Activated T-helper 1 cell treated with anti-CD3 and anti-CD28 coated beads, Interleukin-12 subunit alpha, Interleukin-12 subunit beta, Interleukin-2, Interleukin-4 antibody, amounts not matched to agents 30 ng/mL and 10 ng/mL and 1 ng/mL, durations not matched to agents 14 hours and 24 hours and 36 hours (primary cell): ENCODE measurements at regions of chr16 and their contacts with region 1.

Region 1: GRCh38 chr16:85114909-85115567 is 2.8 kb upstream of the CIBAR2 start:
- DNase-seq: peak; percentile 68
- H3K4me3 Mint-ChIP-seq: peak overlapping the region; percentile 60
- H3K27ac Mint-ChIP-seq: peak overlapping the region; percentile 70
- H3K4me1 Mint-ChIP-seq: peaks cover 7% of the 10 kb centered on the region
- H3K27me3 Mint-ChIP-seq: peaks cover 1% of the 10 kb centered on the region

Region 2: GRCh38 chr16:85104821-85105391 is 10.1 kb before region 1 on chr16:
- intact Hi-C with region 1: no loop called
- DNase-seq: peak; percentile 14
- H3K4me3 Mint-ChIP-seq: no peak overlapping the region
- H3K27ac Mint-ChIP-seq: peak overlapping the region; percentile 83
- H3K4me1 Mint-ChIP-seq: peaks cover 16% of the 10 kb centered on the region
- H3K27me3 Mint-ChIP-seq: peaks cover 3% of the 10 kb centered on the region

Region 3: GRCh38 chr16:85126705-85127419 is 11.8 kb after region 1 on chr16:
- intact Hi-C with region 1: loop called (anchors 1 kb)
- DNase-seq: no peak
- H3K4me3 Mint-ChIP-seq: no peak overlapping the region
- H3K27ac Mint-ChIP-seq: peak overlapping the region; percentile 63
- H3K4me1 Mint-ChIP-seq: peaks cover 11% of the 10 kb centered on the region
- H3K27me3 Mint-ChIP-seq: no peaks in the 10 kb centered on the region

Region 4: DNA sequence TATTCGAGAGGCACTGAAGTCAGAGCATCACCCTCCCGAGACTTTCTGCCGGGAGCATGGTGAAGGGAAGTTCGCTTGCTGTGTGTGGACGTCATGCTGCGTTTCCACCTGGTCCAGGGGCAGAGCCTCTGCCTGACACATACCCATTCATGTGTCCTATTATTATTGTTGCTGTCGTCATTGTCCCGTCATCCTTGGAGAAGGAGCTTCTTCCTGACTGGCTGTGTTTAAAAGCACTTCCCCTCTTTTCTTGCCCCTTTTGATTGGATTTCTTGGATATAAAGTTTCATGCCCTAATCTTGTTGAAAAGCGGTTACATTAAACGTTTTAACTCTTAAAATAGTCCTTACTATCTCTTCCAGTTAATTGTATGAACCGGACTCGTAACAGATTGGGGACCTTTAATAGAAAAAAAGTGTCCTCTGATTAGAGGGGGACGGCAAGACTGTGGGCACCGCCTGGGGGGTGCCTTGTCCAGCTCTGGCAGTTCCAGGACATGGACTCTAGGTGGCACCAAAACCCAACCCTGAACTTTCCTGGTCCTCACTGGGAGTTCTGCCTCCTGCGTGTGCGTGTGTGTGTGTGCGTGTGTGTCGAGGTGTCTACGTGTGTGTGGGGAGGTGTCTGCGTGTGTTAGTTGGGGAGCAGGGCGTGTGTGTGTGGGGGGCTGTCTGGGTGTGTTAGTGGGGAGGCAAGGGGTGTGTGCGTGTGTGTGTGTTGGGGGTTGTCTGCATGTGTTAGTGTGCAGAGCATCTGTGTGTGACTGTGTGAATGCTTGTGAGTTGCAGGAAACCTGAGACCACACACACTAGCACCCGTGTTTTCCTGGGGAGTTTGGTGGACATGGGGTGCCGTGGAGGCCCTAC is 130.5 kb after region 1 on chr16:
- intact Hi-C with region 1: loop called (anchors 2 kb)
- DNase-seq: no peak
- H3K4me3 Mint-ChIP-seq: no peak overlapping the region
- H3K27ac Mint-ChIP-seq: no peak overlapping the region
- H3K4me1 Mint-ChIP-seq: peaks cover 6% of the 10 kb centered on the region
- H3K27me3 Mint-ChIP-seq: peaks cover 2% of the 10 kb centered on the region

Region 5: GRCh38 chr16:85253084-85253941 is 138.3 kb after region 1 on chr16:
- intact Hi-C with region 1: loop called (anchors 1 kb)
- DNase-seq: peak; percentile 35
- H3K4me3 Mint-ChIP-seq: no peak overlapping the region
- H3K27ac Mint-ChIP-seq: no peak overlapping the region
- H3K4me1 Mint-ChIP-seq: no peaks in the 10 kb centered on the region
- H3K27me3 Mint-ChIP-seq: peaks cover 2% of the 10 kb centered on the region

Region 6: GRCh38 chr16:85428168-85428898 is 313.3 kb after region 1 on chr16:
- intact Hi-C with region 1: loop called (anchors 1 kb)
- DNase-seq: peak; percentile 20
- H3K4me3 Mint-ChIP-seq: no peak overlapping the region
- H3K27ac Mint-ChIP-seq: no peak overlapping the region
- H3K4me1 Mint-ChIP-seq: no peaks in the 10 kb centered on the region
- H3K27me3 Mint-ChIP-seq: no peaks in the 10 kb centered on the region